Mammary epithelial cell (primary cell): ENCODE measurements at regions of chr4 and their contacts with region 1.

Region 1: GRCh38 chr4:36187723-36188333 is 56.5 kb downstream of the ARAP2 start:
- DNase-seq: peak; percentile 13
- H3K4me3 ChIP-seq: no peak overlapping the region
- H3K27ac ChIP-seq: no peak overlapping the region
- H3K4me1 ChIP-seq: no peaks in the 10 kb centered on the region
- H3K27me3 ChIP-seq: no peaks in the 10 kb centered on the region
- CTCF ChIP-seq: peak; percentile 61 to 77

Region 2: GRCh38 chr4:34720571-34720970 is 1467.3 kb before region 1 on chr4:
- CTCF ChIA-PET with region 1: no interaction called
- dilution Hi-C with region 1: no loop called
- in situ Hi-C with region 1: no loop called
- intact Hi-C with region 1: loop called (anchors 10 kb)
- DNase-seq: peak; percentile 8
- H3K4me3 ChIP-seq: no peak overlapping the region
- H3K27ac ChIP-seq: no peak overlapping the region
- H3K4me1 ChIP-seq: no peaks in the 10 kb centered on the region
- H3K27me3 ChIP-seq: no peaks in the 10 kb centered on the region
- CTCF ChIP-seq: peak; percentile 31 to 54

Region 3: DNA sequence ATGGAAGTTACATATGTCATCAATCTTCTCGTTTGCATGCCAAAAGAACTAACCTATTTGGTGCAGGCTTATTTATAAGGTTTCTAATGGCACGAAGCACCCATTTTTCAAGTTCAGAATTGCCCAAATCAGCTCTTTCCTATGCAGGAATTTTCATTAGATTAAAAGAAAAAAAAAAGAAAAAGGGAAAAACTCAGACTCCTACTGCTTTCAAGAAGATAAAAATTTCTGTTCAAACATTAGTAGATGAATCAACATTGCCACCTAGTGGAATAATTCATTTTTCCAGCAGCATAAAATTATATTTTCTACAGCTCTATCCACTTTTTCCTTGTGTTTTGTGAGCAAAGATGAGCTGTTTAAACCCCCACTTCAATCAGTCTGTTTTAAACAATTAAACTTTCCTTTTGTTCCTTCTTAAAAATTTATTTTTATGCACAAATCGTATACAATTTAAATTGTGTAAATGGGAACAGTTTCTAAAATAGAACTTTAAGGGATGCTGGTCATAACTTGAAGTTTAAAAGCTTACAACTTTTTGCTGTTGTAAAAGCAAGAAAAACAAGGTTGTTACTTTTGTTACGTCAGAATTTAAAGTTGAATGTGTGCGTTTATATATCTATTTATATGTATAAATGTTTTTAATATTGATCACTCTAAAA is 253.4 kb before region 1 on chr4:
- CTCF ChIA-PET with region 1: no interaction called
- dilution Hi-C with region 1: no loop called
- in situ Hi-C with region 1: no loop called
- intact Hi-C with region 1: loop called (anchors 1 kb)
- DNase-seq: peak; percentile 4
- H3K4me3 ChIP-seq: no peak overlapping the region
- H3K27ac ChIP-seq: no peak overlapping the region
- H3K4me1 ChIP-seq: no peaks in the 10 kb centered on the region
- H3K27me3 ChIP-seq: no peaks in the 10 kb centered on the region
- CTCF ChIP-seq: peak; percentile 41 to 45

Region 4: DNA sequence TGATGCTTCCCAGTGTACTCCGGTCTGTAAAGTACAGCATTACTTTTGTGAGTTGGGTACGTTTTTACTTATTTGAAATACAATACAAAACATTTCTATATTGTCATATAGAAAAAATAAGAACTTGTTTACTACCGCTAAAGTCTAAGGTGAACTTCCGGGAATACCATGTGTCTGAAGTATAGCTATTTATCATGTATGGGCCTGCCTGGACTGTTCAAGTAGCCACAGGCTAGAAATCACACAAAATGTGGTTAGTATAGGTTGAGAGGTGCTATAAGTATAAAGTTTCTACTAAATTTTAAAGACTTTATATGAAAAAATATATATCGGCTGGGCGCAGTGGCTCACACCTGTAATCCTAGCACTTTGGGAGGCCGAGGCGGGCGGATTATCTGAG is 95.8 kb before region 1 on chr4:
- CTCF ChIA-PET with region 1: no interaction called
- dilution Hi-C with region 1: no loop called
- in situ Hi-C with region 1: no loop called
- intact Hi-C with region 1: no loop called
- DNase-seq: no peak
- H3K4me3 ChIP-seq: no peak overlapping the region
- H3K27ac ChIP-seq: no peak overlapping the region
- H3K4me1 ChIP-seq: no peaks in the 10 kb centered on the region
- H3K27me3 ChIP-seq: no peaks in the 10 kb centered on the region
- CTCF ChIP-seq: no peak

Region 5: DNA sequence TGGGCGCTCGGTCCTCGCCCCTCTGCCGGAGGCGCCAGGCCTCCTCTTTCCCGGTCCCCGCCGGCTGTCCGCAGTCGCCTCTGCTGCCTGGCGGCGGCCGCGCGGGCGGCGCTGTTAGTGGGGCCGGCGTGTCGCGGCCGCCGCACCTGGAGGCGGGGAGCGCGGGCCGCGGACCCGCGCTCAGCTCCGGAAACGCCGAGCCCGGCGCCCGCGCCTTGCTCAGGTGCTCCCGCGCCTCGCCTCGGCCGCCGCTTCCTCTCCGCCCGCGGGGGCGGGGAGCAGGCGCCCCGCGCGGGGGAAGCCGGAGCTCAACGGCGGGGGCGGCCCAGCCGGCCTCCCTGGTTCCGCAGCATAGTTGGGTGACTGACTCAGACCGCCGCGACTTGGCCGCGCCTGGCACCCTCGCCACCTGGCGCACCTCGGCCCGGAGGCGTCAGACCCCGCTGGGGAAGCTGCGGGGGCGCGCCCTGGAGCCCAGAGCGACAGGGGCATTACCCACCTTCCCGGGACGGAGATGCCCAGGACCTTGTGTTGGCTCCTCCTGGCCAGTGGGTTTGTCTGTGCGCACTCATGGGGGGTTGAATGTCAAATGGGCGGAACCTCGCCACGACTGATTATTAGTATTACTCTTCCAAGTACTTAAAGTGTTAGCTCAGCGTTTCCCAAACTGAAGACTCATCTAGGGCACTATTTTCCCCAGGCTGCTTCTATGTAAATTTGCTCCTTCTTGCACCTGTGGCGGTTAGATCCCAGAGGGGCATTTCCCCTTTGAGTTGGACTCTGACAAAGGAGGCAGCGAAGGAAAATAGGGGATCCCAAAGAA is 56.6 kb after region 1 on chr4 and contains the start of gene ARAP2:
- CTCF ChIA-PET with region 1: no interaction called
- dilution Hi-C with region 1: no loop called
- in situ Hi-C with region 1: no loop called
- intact Hi-C with region 1: no loop called
- DNase-seq: peak; percentile 77
- H3K4me3 ChIP-seq: peak within 1 kb of the TSS; percentile 77 to 86 (median 80)
- H3K27ac ChIP-seq: peak within 1 kb of the TSS; percentile 55
- H3K4me1 ChIP-seq: peaks cover 7% of the 10 kb centered on the region
- H3K27me3 ChIP-seq: no peaks in the 10 kb centered on the region
- CTCF ChIP-seq: peak in 1 of 2 donors; percentile 6
- total RNA-seq, gene ARAP2: 13.1 to 25.2 TPM